Dendritic cell treated with granulocyte-macrophage colony-stimulating factor and Interleukin-4, amounts not matched to agents 40 ng/mL and 50 ng/mL, for 4 days (primary cell): ENCODE measurements at regions of chr17 and their contacts with region 1.

Region 1: GRCh38 chr17:45385331-45385997 is 47.2 kb downstream of the ARHGAP27 start:
- H3K4me3 Mint-ChIP-seq: no peak overlapping the region
- H3K27ac Mint-ChIP-seq: peak overlapping the region; percentile 9
- H3K4me1 Mint-ChIP-seq: peaks cover 57% of the 10 kb centered on the region
- H3K27me3 Mint-ChIP-seq: peaks cover 27% of the 10 kb centered on the region

Region 2: GRCh38 chr17:45218895-45219661 is 166.4 kb before region 1 on chr17:
- intact Hi-C with region 1: loop called (anchors 1 kb)
- H3K4me3 Mint-ChIP-seq: peak overlapping the region; percentile 77
- H3K27ac Mint-ChIP-seq: no peak overlapping the region
- H3K4me1 Mint-ChIP-seq: peaks cover 46% of the 10 kb centered on the region
- H3K27me3 Mint-ChIP-seq: no peaks in the 10 kb centered on the region

Region 3: GRCh38 chr17:45277216-45277849 is 108.1 kb before region 1 on chr17:
- intact Hi-C with region 1: loop called (anchors 1 kb)
- H3K4me3 Mint-ChIP-seq: no peak overlapping the region
- H3K27ac Mint-ChIP-seq: peak overlapping the region; percentile 40
- H3K4me1 Mint-ChIP-seq: peaks cover 30% of the 10 kb centered on the region
- H3K27me3 Mint-ChIP-seq: no peaks in the 10 kb centered on the region

Region 4: DNA sequence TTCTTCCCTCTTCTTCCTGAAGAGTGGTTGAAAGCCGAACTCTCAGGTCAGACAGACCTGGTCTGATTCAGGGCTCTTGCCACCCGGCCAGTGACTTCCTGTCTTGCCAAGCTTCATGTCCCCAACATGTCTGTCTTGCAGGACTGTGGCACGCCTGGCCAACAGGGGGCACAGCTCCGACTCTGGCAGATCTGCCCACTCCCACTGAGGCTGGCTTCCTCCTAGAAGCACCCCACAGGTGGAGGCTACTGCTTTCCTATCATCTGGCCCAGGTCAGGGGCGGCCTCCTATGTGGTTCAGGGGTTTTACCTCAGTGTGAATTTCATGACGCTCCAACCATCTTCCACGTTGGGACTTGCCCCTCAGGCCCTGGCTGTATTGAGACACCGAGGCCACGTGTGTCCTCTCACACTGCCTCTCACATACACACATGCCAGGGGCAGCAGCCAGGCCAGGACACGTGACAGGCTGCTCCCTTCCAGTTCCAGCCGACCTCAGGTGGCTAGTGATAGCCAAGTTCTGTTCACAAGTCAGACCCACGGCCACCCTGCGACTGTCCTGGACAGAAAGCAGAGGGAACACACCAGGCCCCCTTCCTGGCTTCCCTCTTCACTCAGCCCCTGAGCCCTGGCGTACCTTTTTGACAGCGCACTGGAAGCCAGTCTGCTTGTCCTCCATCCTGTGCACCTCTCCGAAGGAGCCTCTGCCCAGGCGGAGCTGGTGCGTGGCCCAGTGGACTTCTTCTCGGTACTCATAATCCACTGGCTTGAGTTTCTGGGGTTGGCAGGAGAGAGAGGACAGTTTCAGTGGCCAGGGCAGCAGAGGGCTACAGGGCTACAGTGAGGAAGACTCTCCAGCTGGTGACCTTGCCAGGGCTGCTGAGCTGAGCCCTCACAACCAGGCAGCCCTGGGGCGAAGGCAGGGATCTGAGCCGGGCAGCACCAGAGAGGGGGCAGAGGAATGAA is 101.0 kb before region 1 on chr17:
- intact Hi-C with region 1: loop called (anchors 2 kb)
- H3K4me3 Mint-ChIP-seq: no peak overlapping the region
- H3K27ac Mint-ChIP-seq: peak overlapping the region; percentile 50
- H3K4me1 Mint-ChIP-seq: peaks cover 42% of the 10 kb centered on the region
- H3K27me3 Mint-ChIP-seq: no peaks in the 10 kb centered on the region

Region 5: GRCh38 chr17:45345554-45346215 is 39.8 kb before region 1 on chr17:
- intact Hi-C with region 1: loop called (anchors 5 kb)
- H3K4me3 Mint-ChIP-seq: no peak overlapping the region
- H3K27ac Mint-ChIP-seq: peak overlapping the region; percentile 86
- H3K4me1 Mint-ChIP-seq: peaks cover 51% of the 10 kb centered on the region
- H3K27me3 Mint-ChIP-seq: peaks cover 6% of the 10 kb centered on the region